Gastrocnemius medialis (tissue), 4 donors: ENCODE measurements at regions of chr15 and their contacts with region 1.

Region 1: GRCh38 chr15:52528991-52529926 is 579 bp upstream of the MYO5A start:
- DNase-seq: peak; percentile 61 to 66
- ATAC-seq: peak; percentile 81 to 86
- H3K4me3 ChIP-seq: peak overlapping the region; percentile 41 to 93 (median 62)
- H3K27ac ChIP-seq: peak overlapping the region; percentile 36 to 93 (median 85)
- H3K4me1 ChIP-seq: peaks cover 18 to 31% of the 10 kb centered on the region in 2 donors
- H3K27me3 ChIP-seq: no peaks in the 10 kb centered on the region
- CTCF ChIP-seq: peak in 1 of 5 experiments; percentile 1
- POLR2A ChIP-seq: peak in 1 of 2 donors; percentile 51

Region 2: DNA sequence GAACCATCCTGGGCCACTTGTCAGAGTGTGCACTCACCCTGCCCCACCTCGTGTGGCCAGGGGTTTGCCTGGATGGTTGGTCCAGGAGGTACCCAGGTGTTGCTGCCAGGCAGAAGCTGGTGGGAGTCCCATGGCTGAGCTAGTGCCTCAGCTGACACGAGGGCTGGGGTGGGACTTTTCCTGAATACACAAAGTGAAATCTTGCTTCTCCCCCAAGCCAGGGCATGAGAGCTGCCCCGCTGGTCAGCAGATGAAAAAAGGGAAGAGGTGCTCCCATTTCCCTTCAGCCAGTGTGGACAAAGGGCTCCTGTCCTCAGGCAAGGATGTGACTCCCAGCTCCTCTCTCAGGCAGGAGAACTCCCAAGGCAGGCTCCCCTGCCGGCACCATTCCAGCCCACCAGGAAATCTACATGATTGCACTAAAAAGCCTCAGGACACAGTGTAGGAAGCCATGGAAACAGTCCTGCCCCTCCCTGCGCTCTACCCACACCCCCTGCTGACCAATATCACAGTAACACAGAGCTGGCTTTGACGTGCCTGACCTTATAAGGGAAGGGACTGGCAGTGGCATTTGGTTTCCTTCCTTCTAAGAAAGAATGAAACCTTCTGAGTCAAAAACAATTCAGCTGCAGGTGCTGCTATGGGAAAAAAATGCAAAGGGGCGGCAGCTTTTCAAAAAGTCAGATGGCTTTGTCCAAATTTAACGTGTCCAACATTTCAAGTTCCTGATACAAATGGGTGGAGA is 267.6 kb before region 1 on chr15:
- in situ Hi-C with region 1: loop called in 1 of 4 experiments (anchors 10 kb)
- intact Hi-C with region 1: loop called (anchors 2 kb)
- DNase-seq: peak; percentile 11 to 25
- ATAC-seq: peak; percentile 38 to 55
- H3K4me3 ChIP-seq: no peak overlapping the region
- H3K27ac ChIP-seq: peak overlapping the region; percentile 65 to 75 (median 68)
- H3K4me1 ChIP-seq: peaks cover 17 to 21% of the 10 kb centered on the region in 2 donors
- H3K27me3 ChIP-seq: no peaks in the 10 kb centered on the region
- CTCF ChIP-seq: no peak
- POLR2A ChIP-seq: no peak

Region 3: DNA sequence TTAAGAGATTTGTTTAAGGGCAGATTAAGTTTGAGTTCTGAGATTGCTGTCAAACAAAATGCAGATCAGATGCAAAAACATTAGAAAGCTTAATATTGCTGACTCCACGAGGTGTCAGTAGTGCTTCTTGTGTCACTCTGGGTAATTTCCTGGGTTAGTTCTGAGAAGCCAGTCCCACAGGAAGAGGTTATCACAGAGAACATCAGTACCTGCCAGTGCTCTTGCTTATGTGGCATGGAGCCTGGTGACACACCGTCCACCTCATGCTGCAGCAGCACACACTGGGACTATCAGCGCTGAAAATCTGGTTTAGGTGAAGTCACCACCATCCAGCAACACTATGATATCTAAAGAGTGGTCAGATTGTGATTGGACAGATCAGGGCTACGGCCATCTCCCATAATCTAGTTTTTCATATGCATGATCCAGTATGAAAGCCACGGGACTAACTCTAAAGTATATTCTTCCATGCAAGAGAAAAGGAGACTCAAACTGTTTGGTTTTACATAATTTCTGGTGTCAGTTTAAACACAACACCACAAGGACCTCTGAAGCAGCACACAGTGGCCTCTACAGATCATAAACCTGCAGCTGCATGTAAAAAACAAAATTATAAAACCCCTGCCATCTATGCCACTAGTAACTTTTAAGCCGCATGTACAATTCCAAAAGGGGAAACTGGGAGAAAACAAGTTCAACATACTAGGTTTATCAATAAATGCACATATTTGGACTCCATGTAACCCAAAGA is 197.6 kb before region 1 on chr15:
- in situ Hi-C with region 1: no loop called
- intact Hi-C with region 1: loop called (anchors 10 kb)
- DNase-seq: peak; percentile 24 to 33
- ATAC-seq: peak; percentile 82 to 87
- H3K4me3 ChIP-seq: no peak overlapping the region
- H3K27ac ChIP-seq: no peak overlapping the region
- H3K4me1 ChIP-seq: peaks cover 13 to 23% of the 10 kb centered on the region in 2 donors
- H3K27me3 ChIP-seq: no peaks in the 10 kb centered on the region
- CTCF ChIP-seq: peak in 4 of 5 experiments; percentile 20 to 49 (median 33)
- POLR2A ChIP-seq: no peak

Region 4: DNA sequence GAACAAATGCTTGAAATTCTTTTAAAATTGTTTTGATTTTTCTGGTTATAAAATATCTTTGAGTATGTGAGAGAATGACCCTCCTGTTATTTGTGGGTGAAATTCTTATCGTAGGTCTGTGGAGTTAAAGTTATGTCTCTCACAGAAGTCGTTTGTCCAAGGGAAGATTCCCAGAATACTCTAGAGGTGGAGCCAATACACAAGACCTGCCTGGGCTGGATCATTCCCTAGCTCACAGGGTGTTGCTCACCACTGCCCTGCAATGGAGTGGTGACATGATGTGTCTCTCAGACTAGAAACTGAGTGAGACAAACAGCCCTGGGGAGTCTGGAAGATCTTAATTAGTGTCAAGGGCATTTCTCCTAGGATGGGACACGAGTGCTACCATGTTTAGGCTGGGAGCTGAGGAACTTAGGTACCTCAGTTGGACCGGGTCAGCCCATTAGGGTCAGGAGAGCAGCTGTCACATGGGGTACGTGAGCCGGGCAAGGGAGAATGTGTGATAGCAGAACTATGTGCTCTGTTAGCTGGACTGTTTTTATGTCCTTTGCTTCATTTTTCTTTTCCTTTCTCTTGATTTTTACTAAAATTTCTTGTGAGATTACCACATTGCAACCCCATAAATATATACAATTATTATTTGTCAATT is 180.1 kb before region 1 on chr15:
- in situ Hi-C with region 1: loop called in 1 of 4 experiments (anchors 10 kb)
- intact Hi-C with region 1: no loop called
- DNase-seq: no peak
- ATAC-seq: peak; percentile 67 to 79
- H3K4me3 ChIP-seq: no peak overlapping the region
- H3K27ac ChIP-seq: peak overlapping the region in 1 of 4 donors; percentile 17
- H3K4me1 ChIP-seq: no peaks in the 10 kb centered on the region
- H3K27me3 ChIP-seq: no peaks in the 10 kb centered on the region
- CTCF ChIP-seq: no peak
- POLR2A ChIP-seq: no peak

Region 5: GRCh38 chr15:52546031-52546751 is 16.9 kb after region 1 on chr15:
- in situ Hi-C with region 1: no loop called
- intact Hi-C with region 1: no loop called
- DNase-seq: no peak
- ATAC-seq: peak; percentile 12 to 35
- H3K4me3 ChIP-seq: no peak overlapping the region
- H3K27ac ChIP-seq: no peak overlapping the region
- H3K4me1 ChIP-seq: no peaks in the 10 kb centered on the region
- H3K27me3 ChIP-seq: no peaks in the 10 kb centered on the region
- CTCF ChIP-seq: no peak
- POLR2A ChIP-seq: no peak

Region 6: GRCh38 chr15:52563604-52564003 is 34.3 kb after region 1 on chr15:
- in situ Hi-C with region 1: no loop called
- intact Hi-C with region 1: loop called (anchors 5 kb)
- DNase-seq: no peak
- ATAC-seq: no peak
- H3K4me3 ChIP-seq: no peak overlapping the region
- H3K27ac ChIP-seq: peak overlapping the region in 3 of 4 donors; percentile 86 to 93 (median 92)
- H3K4me1 ChIP-seq: peaks cover 74 to 77% of the 10 kb centered on the region in 2 donors
- H3K27me3 ChIP-seq: no peaks in the 10 kb centered on the region
- CTCF ChIP-seq: no peak
- POLR2A ChIP-seq: no peak

Region 7: DNA sequence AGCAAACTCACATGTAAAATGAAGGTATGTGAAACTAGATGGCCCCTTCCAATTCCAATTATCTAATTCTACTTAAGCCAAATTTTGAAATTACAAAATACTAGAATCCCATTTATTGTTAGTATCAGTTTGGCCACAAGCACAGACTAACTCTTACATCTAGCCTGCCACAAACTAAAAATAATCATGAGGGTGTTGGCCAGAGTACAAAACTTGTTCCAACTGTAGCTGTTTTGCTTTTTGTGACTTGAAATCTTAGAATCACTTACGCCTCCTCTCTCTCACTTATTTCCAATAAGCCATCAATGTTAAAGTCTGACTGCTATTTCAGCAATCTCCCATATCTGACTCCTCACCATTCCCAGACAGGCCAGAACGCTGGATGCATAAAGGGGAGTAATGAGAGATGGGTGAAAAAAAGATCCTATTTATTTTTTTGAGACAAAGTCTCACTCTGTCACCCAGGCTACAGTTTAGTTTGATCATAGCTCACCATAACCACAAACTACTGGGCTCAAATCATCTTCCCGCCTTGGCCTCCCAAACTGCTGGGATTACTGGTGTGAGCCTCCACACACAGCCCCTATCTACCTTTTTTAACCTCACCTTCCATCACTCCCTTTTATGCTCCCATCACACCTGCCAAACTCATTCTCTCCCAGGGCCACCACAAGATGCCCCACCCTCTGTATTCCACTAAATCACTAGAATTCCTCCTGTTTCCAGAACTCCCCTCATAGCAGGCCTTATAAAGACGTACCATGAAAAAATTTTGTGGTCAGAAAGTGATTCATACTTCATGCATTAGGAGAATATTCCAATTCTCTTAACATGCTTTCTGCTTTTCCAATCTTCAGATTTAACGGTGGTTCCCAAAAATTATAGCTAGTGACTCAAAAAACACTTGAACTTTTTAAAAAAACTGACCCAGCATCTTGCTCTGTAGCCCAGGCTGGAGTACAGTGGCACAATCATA is 113.4 kb after region 1 on chr15:
- in situ Hi-C with region 1: no loop called
- intact Hi-C with region 1: no loop called
- DNase-seq: no peak
- ATAC-seq: peak in 1 of 2 donors; percentile 7
- H3K4me3 ChIP-seq: no peak overlapping the region
- H3K27ac ChIP-seq: peak overlapping the region; percentile 79 to 89 (median 82)
- H3K4me1 ChIP-seq: peaks cover 41 to 61% of the 10 kb centered on the region in 2 donors
- H3K27me3 ChIP-seq: no peaks in the 10 kb centered on the region
- CTCF ChIP-seq: no peak
- POLR2A ChIP-seq: no peak

Region 8: DNA sequence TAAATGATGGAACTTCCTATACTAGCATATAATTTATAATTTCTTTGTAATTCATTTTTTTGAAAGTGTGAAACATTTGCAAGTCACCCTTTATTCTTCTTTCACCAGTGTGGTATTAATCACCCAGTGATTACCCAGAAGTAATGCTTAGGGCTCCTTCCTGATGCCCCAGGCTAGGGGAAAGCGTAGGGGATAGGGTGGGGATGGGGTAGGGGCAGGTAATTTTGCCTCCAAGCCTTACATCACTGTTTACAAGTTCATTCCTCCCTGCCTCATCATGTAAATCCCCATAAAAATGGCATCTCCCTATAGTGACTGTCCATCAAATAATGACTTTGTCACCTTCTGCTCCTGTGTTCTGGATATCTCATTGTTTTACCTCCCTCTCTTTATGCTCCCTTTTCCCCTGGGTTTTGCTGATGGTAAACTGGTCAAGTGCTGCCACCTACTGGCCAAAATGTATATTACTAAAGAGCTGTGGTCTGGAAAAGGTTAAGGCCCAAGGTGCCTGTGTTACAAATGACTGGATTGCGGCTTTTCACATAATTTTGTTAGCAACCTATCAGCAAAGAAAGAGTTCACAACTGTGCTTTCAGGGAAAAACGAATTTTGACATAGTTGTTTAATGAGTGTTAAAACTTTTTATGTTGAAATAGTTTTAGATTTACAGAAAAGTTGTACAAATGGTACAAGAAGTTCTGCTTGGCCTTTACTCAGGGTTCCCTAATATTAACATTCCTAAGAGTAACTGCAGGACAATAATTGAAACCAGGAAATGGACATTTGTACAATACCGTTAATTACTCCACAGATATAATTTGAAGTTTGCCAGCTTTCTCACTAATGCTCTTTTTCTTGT is 206.2 kb after region 1 on chr15:
- in situ Hi-C with region 1: loop called in 1 of 4 experiments (anchors 10 kb)
- intact Hi-C with region 1: loop called (anchors 2 kb)
- DNase-seq: peak; percentile 47 to 57
- ATAC-seq: peak; percentile 16 to 39
- H3K4me3 ChIP-seq: no peak overlapping the region
- H3K27ac ChIP-seq: peak overlapping the region in 3 of 4 donors; percentile 86 to 89 (median 86)
- H3K4me1 ChIP-seq: peaks cover 36 to 44% of the 10 kb centered on the region in 2 donors
- H3K27me3 ChIP-seq: no peaks in the 10 kb centered on the region
- CTCF ChIP-seq: peak; percentile 84 to 93 (median 85)
- POLR2A ChIP-seq: no peak